ENCODE measurements at regions of chr1 and their contacts with region 1.

Region 1: GRCh38 chr1:89762779-89763648 is 57.8 kb upstream of the LRRC8D start:
- DNase-seq: peak; percentile 89
- H3K4me3 ChIP-seq: peak overlapping the region; percentile 66
- H3K27ac ChIP-seq: peak overlapping the region; percentile 79
- H3K4me1 ChIP-seq: peaks cover 53% of the 10 kb centered on the region
- H3K27me3 ChIP-seq: no peaks in the 10 kb centered on the region
- CTCF ChIP-seq: peak; percentile 100

Region 2: DNA sequence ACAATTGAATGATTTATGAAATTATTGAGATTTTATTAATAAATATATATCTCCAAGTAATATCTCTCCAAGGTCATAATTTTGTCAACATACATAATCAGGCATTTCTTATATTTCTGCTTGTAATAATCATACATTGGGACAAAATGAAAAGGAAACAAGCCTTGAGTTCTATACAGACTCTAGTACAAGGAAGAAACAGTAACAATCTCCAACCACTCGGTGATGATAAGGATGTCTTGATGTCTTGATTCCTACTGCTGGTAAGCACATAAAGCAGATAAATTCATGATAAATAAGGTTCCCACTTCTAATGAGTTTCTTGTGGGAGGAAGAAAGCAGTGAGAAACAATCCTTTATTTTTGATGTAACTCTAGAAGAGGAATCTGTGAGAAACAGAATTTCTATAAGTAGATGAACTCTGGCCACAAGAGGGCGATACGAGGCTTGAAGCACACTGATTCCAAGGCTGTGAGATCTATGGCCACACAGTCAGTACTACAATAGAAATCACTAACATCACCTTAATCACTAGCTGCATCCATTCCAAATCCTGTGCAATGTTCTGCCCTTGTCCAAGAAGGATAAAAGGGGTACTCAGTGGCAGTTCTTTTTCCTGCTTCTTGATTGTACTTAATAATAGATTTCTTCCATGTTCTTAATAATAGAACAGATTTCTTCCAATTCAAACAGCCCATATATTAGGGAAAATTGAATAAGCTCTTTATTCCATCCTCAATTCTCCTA is 279.8 kb before region 1 on chr1:
- intact Hi-C with region 1: loop called (anchors 5 kb)
- DNase-seq: peak; percentile 50
- H3K4me3 ChIP-seq: no peak overlapping the region
- H3K27ac ChIP-seq: no peak overlapping the region
- H3K4me1 ChIP-seq: no peaks in the 10 kb centered on the region
- H3K27me3 ChIP-seq: no peaks in the 10 kb centered on the region
- CTCF ChIP-seq: peak; percentile 87

Region 3: DNA sequence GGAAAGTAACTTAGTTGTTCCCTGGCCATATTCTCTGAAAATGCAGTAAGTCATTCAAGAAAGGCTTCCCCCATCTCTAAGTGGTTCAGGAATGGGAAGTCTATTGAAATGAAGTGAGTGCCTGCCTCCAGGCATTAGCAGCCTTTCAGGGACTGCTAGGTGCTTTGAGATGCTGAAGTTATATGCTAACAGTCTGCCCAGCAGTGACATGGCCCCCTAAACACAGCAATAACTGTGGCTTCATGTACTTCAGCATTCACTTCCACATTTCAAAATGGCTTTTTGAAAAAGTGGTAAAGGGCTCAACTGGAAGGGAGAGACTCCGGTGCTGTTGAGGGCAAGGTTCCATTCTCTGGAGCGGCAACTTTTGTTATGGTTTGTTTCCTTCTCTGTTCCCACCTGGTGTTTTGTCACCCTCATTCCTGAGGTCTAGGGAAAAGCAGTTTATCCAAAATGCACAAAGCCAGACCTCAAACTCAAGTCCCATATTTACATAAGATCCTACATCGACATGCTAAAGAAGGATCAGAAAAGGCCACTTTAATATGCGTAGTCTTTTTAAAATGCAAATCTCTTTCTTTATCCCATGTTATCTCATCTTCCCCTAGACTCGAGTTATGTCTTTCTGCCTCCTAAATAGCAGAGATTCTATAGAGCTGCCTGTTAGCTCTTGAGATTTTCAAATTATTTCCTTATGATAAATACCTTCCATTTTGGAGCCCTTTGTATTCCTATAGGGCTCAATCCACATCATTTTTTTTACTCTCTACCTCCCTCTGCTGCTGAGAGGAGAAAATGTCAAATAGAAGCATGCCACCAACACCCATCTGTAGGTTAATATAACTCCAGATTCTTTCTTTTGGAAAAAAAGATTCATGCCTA is 164.3 kb before region 1 on chr1:
- intact Hi-C with region 1: loop called (anchors 10 kb)
- DNase-seq: no peak
- H3K4me3 ChIP-seq: no peak overlapping the region
- H3K27ac ChIP-seq: no peak overlapping the region
- H3K4me1 ChIP-seq: peaks cover 16% of the 10 kb centered on the region
- H3K27me3 ChIP-seq: no peaks in the 10 kb centered on the region
- CTCF ChIP-seq: peak; percentile 82

Region 4: DNA sequence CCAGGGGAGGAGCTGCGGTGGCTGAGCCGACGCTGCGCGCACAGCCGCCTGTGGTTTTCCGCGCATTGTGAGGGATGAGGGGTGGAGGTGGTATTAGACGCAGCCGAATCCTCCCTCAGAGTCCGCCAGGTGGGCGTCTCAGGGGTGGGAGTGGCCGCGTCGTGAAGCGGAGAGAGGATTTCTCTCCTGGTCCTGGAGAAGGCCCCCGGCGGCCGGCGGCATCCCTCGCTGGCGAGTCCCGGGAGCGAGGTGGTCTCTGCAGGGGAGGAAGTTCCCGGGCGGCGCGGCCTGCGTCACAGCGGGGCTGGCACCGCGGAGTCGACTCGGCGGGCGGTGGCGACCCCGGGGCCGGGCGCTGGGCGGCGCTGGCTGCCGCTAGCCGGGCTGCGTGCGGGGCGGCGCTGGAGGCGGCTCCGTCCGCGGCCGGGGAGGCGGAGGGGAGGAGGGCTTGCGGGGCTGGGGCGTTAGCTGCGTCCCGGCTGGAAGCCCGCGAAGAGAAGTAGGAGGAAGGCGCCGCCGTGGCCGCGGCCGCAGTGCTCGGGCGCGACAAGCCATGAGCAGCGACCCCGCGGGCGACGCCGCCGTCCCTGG is 130.3 kb before region 1 on chr1 and contains the start of gene LRRC8C:
- intact Hi-C with region 1: loop called (anchors 5 kb)
- DNase-seq: peak; percentile 89
- H3K4me3 ChIP-seq: peak within 1 kb of the TSS; percentile 94
- H3K27ac ChIP-seq: peak within 1 kb of the TSS; percentile 98
- H3K4me1 ChIP-seq: peaks cover 84% of the 10 kb centered on the region
- H3K27me3 ChIP-seq: no peaks in the 10 kb centered on the region
- CTCF ChIP-seq: peak; percentile 74
- total RNA-seq, gene LRRC8C: 6.2 TPM

Region 5: GRCh38 chr1:89719502-89720306 is 43.3 kb before region 1 on chr1:
- intact Hi-C with region 1: loop called (anchors 10 kb)
- DNase-seq: no peak
- H3K4me3 ChIP-seq: no peak overlapping the region
- H3K27ac ChIP-seq: peak overlapping the region; percentile 79
- H3K4me1 ChIP-seq: peaks cover 60% of the 10 kb centered on the region
- H3K27me3 ChIP-seq: no peaks in the 10 kb centered on the region
- CTCF ChIP-seq: no peak